Uterus (tissue), 4 donors: ENCODE measurements at regions of chr9 and their contacts with region 1.

Region 1: GRCh38 chr9:70484210-70485130 is 70.0 kb upstream of the KLF9 start:
- DNase-seq: peak in 1 of 2 donors; percentile 66
- H3K4me3 ChIP-seq: no peak overlapping the region
- H3K27ac ChIP-seq: peak overlapping the region; percentile 90 to 91
- H3K4me1 ChIP-seq: peaks cover 14 to 28% of the 10 kb centered on the region in 2 donors
- H3K27me3 ChIP-seq: no peaks in the 10 kb centered on the region
- CTCF ChIP-seq: peak; percentile 50 to 79 (median 76)
- POLR2A ChIP-seq: no peak

Region 2: DNA sequence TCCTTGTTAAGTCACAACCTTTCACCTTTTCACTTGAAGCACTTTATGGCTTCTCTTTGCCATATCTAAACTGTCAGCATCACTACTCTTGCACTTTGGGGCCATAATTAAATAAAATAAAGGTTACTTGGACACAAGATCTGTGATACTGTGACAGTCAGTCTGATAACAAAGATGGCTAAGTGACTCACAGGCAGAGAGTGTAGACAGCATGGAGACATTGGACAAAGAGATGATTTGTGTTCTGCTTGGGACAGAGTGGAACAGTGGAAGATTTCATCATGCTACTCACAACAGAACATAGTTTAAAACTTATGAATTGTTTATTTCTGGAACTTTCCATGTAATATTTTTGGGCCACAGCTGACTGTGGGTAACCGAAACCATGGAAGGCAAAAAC is 307.3 kb before region 1 on chr9:
- intact Hi-C with region 1: no loop called
- DNase-seq: no peak
- H3K4me3 ChIP-seq: no peak overlapping the region
- H3K27ac ChIP-seq: no peak overlapping the region
- H3K4me1 ChIP-seq: no peaks in the 10 kb centered on the region
- H3K27me3 ChIP-seq: no peaks in the 10 kb centered on the region
- CTCF ChIP-seq: no peak
- POLR2A ChIP-seq: no peak

Region 3: GRCh38 chr9:70419546-70420266 is 64.8 kb before region 1 on chr9:
- intact Hi-C with region 1: loop called (anchors 1 kb)
- DNase-seq: peak; percentile 96 to 99
- H3K4me3 ChIP-seq: peak overlapping the region; percentile 47 to 54
- H3K27ac ChIP-seq: peak overlapping the region; percentile 100
- H3K4me1 ChIP-seq: peaks cover 3 to 15% of the 10 kb centered on the region in 2 donors
- H3K27me3 ChIP-seq: no peaks in the 10 kb centered on the region
- CTCF ChIP-seq: peak in 2 of 4 experiments; percentile 8 to 35
- POLR2A ChIP-seq: peak; percentile 66 to 92

Region 4: GRCh38 chr9:70587201-70587600 is 102.7 kb after region 1 on chr9:
- intact Hi-C with region 1: loop called (anchors 5 kb)
- DNase-seq: peak; percentile 34 to 67
- H3K4me3 ChIP-seq: no peak overlapping the region
- H3K27ac ChIP-seq: peak overlapping the region; percentile 90 to 96
- H3K4me1 ChIP-seq: peaks cover 17 to 33% of the 10 kb centered on the region in 2 donors
- H3K27me3 ChIP-seq: no peaks in the 10 kb centered on the region
- CTCF ChIP-seq: peak in 1 of 4 experiments; percentile 15
- POLR2A ChIP-seq: no peak